ENCODE measurements at regions of chr15 and their contacts with region 1.

Region 1: DNA sequence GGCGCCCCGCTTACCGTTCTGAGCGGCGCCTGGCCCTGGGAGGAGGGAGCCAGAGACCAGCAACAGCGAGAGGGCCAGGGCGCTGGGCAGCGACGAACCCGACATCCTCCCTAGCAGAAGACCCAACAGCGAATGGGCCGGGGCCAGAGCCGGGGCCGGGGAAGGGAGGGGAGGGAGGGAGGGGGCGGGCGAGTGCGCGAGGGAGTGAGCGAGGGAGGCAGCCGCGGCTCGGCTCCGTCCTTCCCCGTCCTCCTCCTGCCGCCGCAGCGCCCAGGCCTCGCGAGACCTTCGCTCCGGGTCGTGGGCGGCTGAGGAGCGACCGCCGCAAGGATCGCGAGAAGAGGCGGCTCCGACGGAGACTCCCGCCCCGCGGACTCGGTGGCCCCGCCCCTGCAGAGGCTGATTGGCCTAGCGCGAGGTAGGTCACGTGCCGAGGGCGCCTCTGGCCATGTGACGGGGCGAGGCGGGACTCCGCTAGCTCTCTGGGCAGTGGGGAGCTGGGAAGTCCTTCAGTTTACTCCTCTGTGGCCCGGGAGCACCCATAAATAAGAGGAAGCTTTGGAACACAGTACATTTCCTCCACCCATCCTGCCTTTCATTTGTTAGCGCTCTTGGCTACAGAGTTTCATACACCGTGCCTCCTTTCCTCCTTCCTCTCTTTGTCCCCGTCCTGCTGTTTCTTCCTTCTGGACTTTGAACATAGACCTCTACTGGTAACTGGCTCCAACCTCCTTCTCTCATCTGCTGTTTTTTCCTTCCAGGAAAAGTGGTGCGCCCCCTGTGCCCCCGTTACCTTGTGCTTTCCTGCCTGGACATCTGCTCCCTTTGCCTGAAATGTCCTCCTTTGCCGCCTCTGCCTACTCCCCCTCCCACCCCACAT is at the start of gene NPTN:
- DNase-seq: peak; percentile 98 to 99 (median 99)
- H3K4me3 ChIP-seq: peak within 1 kb of the TSS; percentile 37 to 99 (median 62)
- H3K27ac ChIP-seq: peak within 1 kb of the TSS in 4 of 5 donors; percentile 85 to 92 (median 91)
- H3K4me1 ChIP-seq: peaks cover 37 to 45% of the 10 kb centered on the region in 2 donors
- H3K27me3 ChIP-seq: no peaks in the 10 kb centered on the region
- CTCF ChIP-seq: no peak
- POLR2A ChIP-seq: peak; percentile 11 to 86
- total RNA-seq, gene NPTN: 100 to 197 (median 132) TPM

Region 2: GRCh38 chr15:73560501-73561117 is 72.7 kb before region 1 on chr15:
- intact Hi-C with region 1: loop called (anchors 5 kb)
- DNase-seq: peak in 1 of 7 donors; percentile 12
- H3K4me3 ChIP-seq: no peak overlapping the region
- H3K27ac ChIP-seq: no peak overlapping the region
- H3K4me1 ChIP-seq: no peaks in the 10 kb centered on the region
- H3K27me3 ChIP-seq: no peaks in the 10 kb centered on the region
- CTCF ChIP-seq: peak; percentile 28 to 57 (median 32)
- POLR2A ChIP-seq: no peak

Region 3: GRCh38 chr15:73716417-73716816 is 83.1 kb after region 1 on chr15:
- intact Hi-C with region 1: no loop called
- DNase-seq: no peak
- H3K4me3 ChIP-seq: no peak overlapping the region
- H3K27ac ChIP-seq: no peak overlapping the region
- H3K4me1 ChIP-seq: no peaks in the 10 kb centered on the region
- H3K27me3 ChIP-seq: no peaks in the 10 kb centered on the region
- CTCF ChIP-seq: no peak
- POLR2A ChIP-seq: no peak

Region 4: DNA sequence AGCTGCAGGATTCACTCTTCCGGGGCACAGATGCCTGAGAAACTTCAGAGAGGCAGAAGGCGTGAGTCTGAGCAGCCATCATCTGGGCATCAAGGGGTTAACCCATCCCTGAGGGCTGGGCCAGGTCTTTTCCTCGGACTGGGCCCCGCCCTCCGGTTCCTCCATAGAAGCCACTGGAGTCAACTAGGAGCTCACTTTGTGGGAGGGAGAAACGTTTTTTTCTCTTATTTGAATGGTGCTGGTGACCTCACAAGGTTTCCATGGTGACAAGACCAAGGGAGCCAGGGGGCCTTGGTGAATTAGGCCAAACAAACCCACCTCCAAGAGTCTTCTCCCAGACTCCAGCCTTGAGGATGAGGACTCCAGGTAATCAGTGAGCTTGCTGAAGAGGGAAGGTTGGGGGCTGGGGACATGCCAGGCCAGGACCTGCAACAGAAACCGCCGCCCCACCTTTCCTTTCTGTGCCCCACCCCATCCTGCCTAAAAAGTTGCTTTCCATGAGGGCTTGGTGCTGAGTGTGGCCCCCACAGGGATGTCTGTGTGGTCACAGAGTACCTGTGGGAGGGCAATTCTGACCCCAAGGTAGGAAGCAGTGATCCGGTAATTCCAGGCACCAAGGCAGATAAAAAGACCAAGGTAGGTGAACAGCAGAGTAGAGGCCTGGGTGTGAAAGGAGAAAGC is 134.6 kb after region 1 on chr15:
- intact Hi-C with region 1: no loop called
- DNase-seq: no peak
- H3K4me3 ChIP-seq: no peak overlapping the region
- H3K27ac ChIP-seq: no peak overlapping the region
- H3K4me1 ChIP-seq: no peaks in the 10 kb centered on the region
- H3K27me3 ChIP-seq: no peaks in the 10 kb centered on the region
- CTCF ChIP-seq: no peak
- POLR2A ChIP-seq: no peak

Measured in adrenal gland (tissue), 19 donors.